ENCODE measurements at regions of chr7 and their contacts with region 1.

Region 1: GRCh38 chr7:33062782-33063443 is 337 bp upstream of the NT5C3A start:
- DNase-seq: peak; percentile 87 to 95 (median 89)
- H3K4me3 ChIP-seq: peak overlapping the region; percentile 63 to 89 (median 80)
- H3K4me3 Mint-ChIP-seq: peak overlapping the region; percentile 88 to 92
- H3K27ac ChIP-seq: peak overlapping the region; percentile 81 to 90
- H3K27ac Mint-ChIP-seq: peak overlapping the region; percentile 84 to 94 (median 93)
- H3K4me1 ChIP-seq: peaks cover 25 to 37% of the 10 kb centered on the region in 2 donors
- H3K4me1 Mint-ChIP-seq: peaks cover 34% of the 10 kb centered on the region
- H3K27me3 ChIP-seq: no peaks in the 10 kb centered on the region
- H3K27me3 Mint-ChIP-seq: peaks cover 0 to 1% (median 1%) of the 10 kb centered on the region in 3 donors
- CTCF ChIP-seq: no peak

Region 2: GRCh38 chr7:32495298-32496176 is 567.4 kb before region 1 on chr7 and contains the start of gene AVL9:
- intact Hi-C with region 1: loop called in 1 of 2 experiments (anchors 10 kb)
- DNase-seq: peak; percentile 89 to 96 (median 92)
- H3K4me3 ChIP-seq: peak within 1 kb of the TSS; percentile 76 to 94 (median 77)
- H3K4me3 Mint-ChIP-seq: peak within 1 kb of the TSS; percentile 90 to 94
- H3K27ac ChIP-seq: peak within 1 kb of the TSS; percentile 90 to 99
- H3K27ac Mint-ChIP-seq: peak within 1 kb of the TSS; percentile 94 to 99 (median 96)
- H3K4me1 ChIP-seq: peaks cover 13 to 25% of the 10 kb centered on the region in 2 donors
- H3K4me1 Mint-ChIP-seq: peaks cover 37% of the 10 kb centered on the region
- H3K27me3 ChIP-seq: no peaks in the 10 kb centered on the region
- H3K27me3 Mint-ChIP-seq: peaks cover 0 to 5% (median 3%) of the 10 kb centered on the region in 3 donors
- CTCF ChIP-seq: no peak
- polyA plus RNA-seq, gene AVL9: 16.3 to 17.1 (median 16.8) TPM

Region 3: GRCh38 chr7:33024189-33024757 is 38.6 kb before region 1 on chr7:
- intact Hi-C with region 1: no loop called
- DNase-seq: no peak
- H3K4me3 ChIP-seq: no peak overlapping the region
- H3K4me3 Mint-ChIP-seq: no peak overlapping the region
- H3K27ac ChIP-seq: peak overlapping the region in 1 of 2 donors; percentile 36
- H3K27ac Mint-ChIP-seq: no peak overlapping the region
- H3K4me1 ChIP-seq: peaks cover 0 to 4% of the 10 kb centered on the region in 2 donors
- H3K4me1 Mint-ChIP-seq: peaks cover 4% of the 10 kb centered on the region
- H3K27me3 ChIP-seq: no peaks in the 10 kb centered on the region
- H3K27me3 Mint-ChIP-seq: no peaks in the 10 kb centered on the region
- CTCF ChIP-seq: no peak

Region 4: GRCh38 chr7:33109005-33109757 is 46.3 kb after region 1 on chr7 and contains the start of gene RP9:
- intact Hi-C with region 1: loop called in 1 of 2 experiments (anchors 5 kb)
- DNase-seq: peak; percentile 40 to 70 (median 60)
- H3K4me3 ChIP-seq: peak within 1 kb of the TSS; percentile 50 to 88 (median 82)
- H3K4me3 Mint-ChIP-seq: peak within 1 kb of the TSS; percentile 88 to 94
- H3K27ac ChIP-seq: peak within 1 kb of the TSS in 1 of 2 donors; percentile 73
- H3K27ac Mint-ChIP-seq: peak within 1 kb of the TSS; percentile 44 to 86 (median 74)
- H3K4me1 ChIP-seq: peaks cover 22 to 30% of the 10 kb centered on the region in 2 donors
- H3K4me1 Mint-ChIP-seq: peaks cover 27% of the 10 kb centered on the region
- H3K27me3 ChIP-seq: peaks cover 7 to 8% of the 10 kb centered on the region in 2 donors
- H3K27me3 Mint-ChIP-seq: peaks cover 15 to 19% (median 19%) of the 10 kb centered on the region in 3 donors
- CTCF ChIP-seq: peak; percentile 77
- polyA plus RNA-seq, gene RP9: 6.5 to 12.7 (median 8.7) TPM

Region 5: DNA sequence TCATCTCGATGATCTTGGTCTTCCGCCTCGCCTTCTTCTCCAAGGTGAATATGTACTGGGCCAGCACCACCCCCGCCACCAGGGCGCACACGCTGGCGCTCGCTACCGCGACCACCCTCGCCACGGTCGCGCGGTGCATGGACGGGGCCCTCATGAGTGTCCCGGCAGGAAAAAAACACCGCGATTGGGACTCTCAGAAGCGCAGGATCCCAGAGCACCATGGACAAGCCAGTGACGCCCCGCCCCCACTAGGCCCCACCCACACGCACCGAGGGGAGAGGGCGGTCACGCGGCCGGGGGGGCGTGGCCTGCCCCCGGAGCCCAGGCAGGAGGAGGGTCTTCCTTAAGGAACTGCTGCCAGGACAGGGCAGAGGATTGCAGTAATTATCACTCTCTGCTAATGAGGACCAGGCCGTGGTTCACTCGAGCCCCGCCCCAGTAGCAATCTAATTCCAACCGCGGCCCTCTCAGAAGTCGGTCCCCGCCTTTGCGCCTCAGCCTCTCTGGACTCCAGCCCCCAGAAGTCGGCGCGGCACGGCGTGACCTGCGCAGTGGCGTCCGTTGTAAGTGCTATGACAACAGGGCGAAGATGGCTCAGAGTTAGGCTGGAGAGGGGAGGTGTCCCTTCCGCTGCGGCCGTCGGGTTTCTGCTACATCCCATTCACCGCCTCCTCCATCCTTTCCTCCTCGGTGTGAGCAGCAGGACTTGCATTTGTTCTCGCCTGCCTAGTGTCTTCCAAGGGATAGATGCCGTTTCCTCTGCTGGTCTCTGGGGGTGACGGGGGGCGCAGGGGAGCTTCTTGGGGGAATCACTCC is 66.3 kb after region 1 on chr7 and contains the start of gene BBS9:
- intact Hi-C with region 1: loop called (anchors 2 to 5 kb)
- DNase-seq: peak; percentile 89 to 92 (median 90)
- H3K4me3 ChIP-seq: peak within 1 kb of the TSS; percentile 60 to 80 (median 63)
- H3K4me3 Mint-ChIP-seq: peak within 1 kb of the TSS; percentile 86 to 94
- H3K27ac ChIP-seq: peak within 1 kb of the TSS; percentile 72 to 80
- H3K27ac Mint-ChIP-seq: peak within 1 kb of the TSS; percentile 77 to 93 (median 91)
- H3K4me1 ChIP-seq: peaks cover 12 to 16% of the 10 kb centered on the region in 2 donors
- H3K4me1 Mint-ChIP-seq: peaks cover 16% of the 10 kb centered on the region
- H3K27me3 ChIP-seq: no peaks in the 10 kb centered on the region
- H3K27me3 Mint-ChIP-seq: no peaks in the 10 kb centered on the region
- CTCF ChIP-seq: no peak
- polyA plus RNA-seq, gene BBS9: 4.9 to 7.5 (median 6.8) TPM

Region 6: GRCh38 chr7:33669251-33669670 is 606.3 kb after region 1 on chr7:
- intact Hi-C with region 1: no loop called
- DNase-seq: no peak
- H3K4me3 ChIP-seq: no peak overlapping the region
- H3K4me3 Mint-ChIP-seq: no peak overlapping the region
- H3K27ac ChIP-seq: no peak overlapping the region
- H3K27ac Mint-ChIP-seq: peak overlapping the region in 1 of 7 donors; percentile 51
- H3K4me1 ChIP-seq: no peaks in the 10 kb centered on the region
- H3K4me1 Mint-ChIP-seq: peaks cover 12% of the 10 kb centered on the region
- H3K27me3 ChIP-seq: no peaks in the 10 kb centered on the region
- H3K27me3 Mint-ChIP-seq: peaks cover 0 to 3% (median 2%) of the 10 kb centered on the region in 3 donors
- CTCF ChIP-seq: no peak

Measured in CD14-positive monocyte (primary cell).